Heart left ventricle (tissue), 16 donors: ENCODE measurements at regions of chr6 and their contacts with region 1.

Region 1: DNA sequence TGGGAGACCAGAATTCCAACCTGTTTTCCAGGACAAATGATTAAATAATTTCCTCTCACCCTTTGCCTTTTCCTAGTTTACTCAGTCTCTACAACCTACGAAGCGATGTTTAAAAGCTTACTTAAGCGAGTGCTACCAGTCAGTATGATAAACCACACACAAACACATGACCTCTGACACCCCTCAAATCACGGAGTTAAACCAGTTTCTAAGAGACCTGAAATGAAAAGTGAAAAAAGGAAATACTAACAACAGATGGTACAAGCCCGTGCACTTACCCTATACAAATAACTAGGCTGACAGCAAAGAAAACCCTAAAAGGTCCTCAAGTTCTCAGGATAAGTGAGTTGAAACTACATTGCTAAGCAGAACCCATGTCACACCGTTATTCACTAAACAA is 7.7 kb downstream of the TNFRSF21 start:
- DNase-seq: no peak
- ATAC-seq: no peak
- H3K4me3 ChIP-seq: no peak overlapping the region
- H3K27ac ChIP-seq: no peak overlapping the region
- H3K4me1 ChIP-seq: peaks cover 0 to 3% (median 0%) of the 10 kb centered on the region in 12 donors
- H3K27me3 ChIP-seq: peaks cover 0 to 7% (median 3%) of the 10 kb centered on the region in 9 donors
- CTCF ChIP-seq: no peak
- POLR2A ChIP-seq: no peak

Region 2: GRCh38 chr6:47264775-47265184 is 37.3 kb before region 1 on chr6:
- intact Hi-C with region 1: loop called in 1 of 10 experiments (anchors 5 kb)
- DNase-seq: peak in 1 of 5 donors; percentile 13
- ATAC-seq: peak; percentile 42 to 78 (median 50)
- H3K4me3 ChIP-seq: no peak overlapping the region
- H3K27ac ChIP-seq: peak overlapping the region in 2 of 12 donors; percentile 27 to 46
- H3K4me1 ChIP-seq: peaks cover 0 to 18% (median 0%) of the 10 kb centered on the region in 12 donors
- H3K27me3 ChIP-seq: no peaks in the 10 kb centered on the region
- CTCF ChIP-seq: no peak
- POLR2A ChIP-seq: no peak